ENCODE measurements at regions of chr13 and their contacts with region 1.

Region 1: DNA sequence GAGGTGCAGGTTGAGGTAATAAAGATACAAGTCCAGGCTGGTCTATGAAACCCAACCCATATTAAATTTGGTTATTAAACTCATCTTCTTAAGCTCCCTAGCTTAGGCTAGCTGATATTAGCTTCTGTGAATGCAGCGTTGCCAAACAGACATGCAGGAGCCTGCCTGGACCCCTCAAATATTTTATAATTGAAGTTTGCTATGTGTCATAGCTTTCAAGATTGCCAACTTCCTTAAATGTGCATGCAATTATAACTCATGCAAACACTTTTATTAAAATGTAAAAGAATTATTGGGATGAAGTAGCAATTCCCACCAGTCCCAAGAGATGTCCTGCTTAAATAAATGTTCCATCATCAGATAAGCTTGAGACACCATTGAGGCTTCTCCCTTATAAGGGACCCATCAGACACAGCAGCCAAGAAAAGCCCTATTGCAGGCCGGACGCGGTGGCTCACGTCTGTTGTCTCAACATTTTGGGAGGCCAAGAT is 51.3 kb downstream of the MBNL2 start:
- DNase-seq: no peak
- ATAC-seq: no peak
- H3K4me3 ChIP-seq: no peak overlapping the region
- H3K27ac ChIP-seq: peak overlapping the region; percentile 99
- H3K4me1 ChIP-seq: peaks cover 94% of the 10 kb centered on the region
- H3K27me3 ChIP-seq: no peaks in the 10 kb centered on the region
- CTCF ChIP-seq: no peak

Region 2: GRCh38 chr13:97242755-97243497 is 30.5 kb before region 1 on chr13:
- CTCF ChIA-PET with region 1: no interaction called
- POLR2A ChIA-PET with region 1: no interaction called
- in situ Hi-C with region 1: no loop called
- intact Hi-C with region 1: no loop called
- DNase-seq: no peak
- ATAC-seq: peak; percentile 74
- H3K4me3 ChIP-seq: peak overlapping the region in 1 of 2 experiments; percentile 23; a peak in 2 of 4 replicates
- H3K27ac ChIP-seq: peak overlapping the region; percentile 100
- H3K4me1 ChIP-seq: peaks cover 94% of the 10 kb centered on the region
- H3K27me3 ChIP-seq: no peaks in the 10 kb centered on the region
- CTCF ChIP-seq: no peak

Region 3: GRCh38 chr13:97287047-97287383 is 13.6 kb after region 1 on chr13:
- CTCF ChIA-PET with region 1: interaction called, 10 read pairs
- POLR2A ChIA-PET with region 1: no interaction called
- in situ Hi-C with region 1: no loop called
- intact Hi-C with region 1: no loop called
- DNase-seq: no peak
- ATAC-seq: no peak
- H3K4me3 ChIP-seq: no peak overlapping the region
- H3K27ac ChIP-seq: peak overlapping the region; percentile 99
- H3K4me1 ChIP-seq: peaks cover 84% of the 10 kb centered on the region
- H3K27me3 ChIP-seq: no peaks in the 10 kb centered on the region
- CTCF ChIP-seq: no peak